Activated naive CD4-positive, alpha-beta T cell treated with anti-CD3 and anti-CD28 coated beads for 36 hours (primary cell): ENCODE measurements at regions of chr14 and their contacts with region 1.

Region 1: GRCh38 chr14:65102441-65103149 is at the start of gene MAX:
- DNase-seq: peak; percentile 99
- H3K4me3 Mint-ChIP-seq: peak within 1 kb of the TSS; percentile 87
- H3K27ac Mint-ChIP-seq: peak within 1 kb of the TSS; percentile 91
- H3K4me1 Mint-ChIP-seq: peaks cover 30% of the 10 kb centered on the region
- H3K27me3 Mint-ChIP-seq: no peaks in the 10 kb centered on the region
- total RNA-seq, gene MAX: 67.9 to 75.1 TPM

Region 2: GRCh38 chr14:64914237-64914971 is 188.2 kb before region 1 on chr14 and contains the start of gene CHURC1:
- CTCF ChIA-PET with region 1: no interaction called
- intact Hi-C with region 1: loop called (anchors 5 kb)
- DNase-seq: peak; percentile 98
- H3K4me3 Mint-ChIP-seq: peak within 1 kb of the TSS; percentile 78
- H3K27ac Mint-ChIP-seq: peak within 1 kb of the TSS; percentile 88
- H3K4me1 Mint-ChIP-seq: peaks cover 51% of the 10 kb centered on the region
- H3K27me3 Mint-ChIP-seq: no peaks in the 10 kb centered on the region
- total RNA-seq, gene CHURC1: 49.6 to 59.7 TPM

Region 3: DNA sequence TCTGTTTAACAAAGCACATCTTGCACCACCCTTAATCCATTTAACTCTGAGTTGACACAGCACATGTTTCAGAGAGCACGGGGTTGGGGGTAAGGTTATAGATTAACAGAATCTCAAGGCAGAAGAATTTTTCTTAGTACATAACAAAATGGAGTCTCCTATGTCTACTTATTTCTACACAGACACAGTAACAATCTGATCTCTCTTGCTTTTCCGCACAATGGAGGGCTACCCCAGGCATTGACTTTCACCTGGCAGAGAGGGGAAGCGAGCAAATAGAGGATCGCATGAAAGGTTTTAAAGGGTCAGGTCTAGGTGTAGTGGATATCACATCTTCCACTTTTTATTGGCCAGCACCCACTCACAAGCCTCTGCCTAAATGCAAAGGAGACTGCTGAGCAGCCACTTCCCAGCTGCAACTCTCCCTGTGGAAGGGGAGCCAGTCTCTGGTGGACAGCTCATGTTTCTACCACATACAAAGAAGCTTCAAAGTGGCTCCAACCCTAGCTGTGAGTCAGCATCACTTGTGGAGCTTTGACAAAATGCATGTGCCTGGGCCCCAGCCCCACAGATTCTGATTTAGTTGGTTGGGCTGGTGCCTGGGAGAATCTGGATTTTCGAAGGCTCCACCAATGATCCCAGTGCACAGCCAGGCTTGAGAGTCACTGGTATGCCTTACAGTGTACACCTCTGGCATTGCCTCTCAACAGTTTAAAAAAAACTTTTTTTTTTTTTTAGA is 123.1 kb before region 1 on chr14:
- CTCF ChIA-PET with region 1: no interaction called
- intact Hi-C with region 1: no loop called
- DNase-seq: no peak
- H3K4me3 Mint-ChIP-seq: no peak overlapping the region
- H3K27ac Mint-ChIP-seq: no peak overlapping the region
- H3K4me1 Mint-ChIP-seq: peaks cover 5% of the 10 kb centered on the region
- H3K27me3 Mint-ChIP-seq: no peaks in the 10 kb centered on the region

Region 4: GRCh38 chr14:65170768-65171507 is 68.3 kb after region 1 on chr14:
- CTCF ChIA-PET with region 1: no interaction called
- intact Hi-C with region 1: loop called (anchors 2 kb)
- DNase-seq: peak; percentile 78
- H3K4me3 Mint-ChIP-seq: peak overlapping the region; percentile 67
- H3K27ac Mint-ChIP-seq: no peak overlapping the region
- H3K4me1 Mint-ChIP-seq: peaks cover 15% of the 10 kb centered on the region
- H3K27me3 Mint-ChIP-seq: peaks cover 4% of the 10 kb centered on the region

Region 5: GRCh38 chr14:65302571-65303189 is 200.1 kb after region 1 on chr14:
- CTCF ChIA-PET with region 1: no interaction called
- intact Hi-C with region 1: loop called (anchors 5 kb)
- DNase-seq: peak; percentile 82
- H3K4me3 Mint-ChIP-seq: peak overlapping the region; percentile 23
- H3K27ac Mint-ChIP-seq: peak overlapping the region; percentile 95
- H3K4me1 Mint-ChIP-seq: peaks cover 61% of the 10 kb centered on the region
- H3K27me3 Mint-ChIP-seq: no peaks in the 10 kb centered on the region

Region 6: GRCh38 chr14:65847075-65847847 is 744.7 kb after region 1 on chr14:
- CTCF ChIA-PET with region 1: no interaction called
- intact Hi-C with region 1: loop called (anchors 2 kb)
- DNase-seq: peak; percentile 83
- H3K4me3 Mint-ChIP-seq: no peak overlapping the region
- H3K27ac Mint-ChIP-seq: peak overlapping the region; percentile 71
- H3K4me1 Mint-ChIP-seq: peaks cover 62% of the 10 kb centered on the region
- H3K27me3 Mint-ChIP-seq: no peaks in the 10 kb centered on the region